ENCODE measurements at regions of chr1 and their contacts with region 1.

Region 1: DNA sequence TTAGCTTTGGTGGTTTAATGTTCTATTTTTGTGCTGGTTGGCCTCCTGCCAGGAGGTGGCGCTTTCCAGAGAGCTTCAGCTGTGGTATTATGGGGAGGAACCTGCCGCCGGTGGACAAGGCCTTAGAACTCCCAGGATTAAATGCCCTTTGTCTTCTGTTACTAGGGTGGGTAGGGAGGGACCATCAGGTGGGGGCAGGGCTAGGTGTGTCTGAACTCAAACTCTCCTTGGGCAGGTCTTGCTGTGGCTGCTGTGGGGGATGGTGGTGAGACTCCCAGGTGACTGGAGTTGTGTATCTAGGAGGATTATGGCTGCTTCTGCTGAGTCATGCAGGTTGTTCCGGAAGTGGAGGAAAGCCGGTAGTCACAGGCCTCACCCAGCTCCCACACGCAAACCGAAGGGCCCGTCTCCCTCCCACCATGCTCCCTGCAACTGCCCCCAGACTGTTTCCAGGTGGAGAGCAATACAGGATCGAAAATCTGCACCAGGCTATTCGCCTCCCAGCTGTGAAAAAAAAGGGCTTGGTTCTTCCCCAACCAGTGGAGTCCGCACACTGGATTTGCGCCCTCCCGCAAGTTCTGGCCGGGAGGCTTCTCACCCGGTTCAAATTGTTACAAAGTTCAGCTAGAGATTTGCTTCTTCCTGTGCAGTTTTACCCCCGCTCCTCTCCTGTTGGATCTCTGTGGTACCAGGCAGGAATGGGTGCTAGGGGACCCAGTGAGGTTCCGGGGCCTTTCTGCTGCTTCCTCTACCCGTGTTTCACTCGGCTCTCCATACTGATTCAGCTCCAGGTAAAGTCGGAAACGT is 220.5 kb downstream of the CENPF start:
- H3K4me3 Mint-ChIP-seq: no peak overlapping the region
- H3K27ac Mint-ChIP-seq: no peak overlapping the region
- H3K4me1 Mint-ChIP-seq: no peaks in the 10 kb centered on the region
- H3K27me3 Mint-ChIP-seq: no peaks in the 10 kb centered on the region

Region 2: GRCh38 chr1:214882616-214883015 is 59.1 kb after region 1 on chr1:
- intact Hi-C with region 1: no loop called
- H3K4me3 Mint-ChIP-seq: no peak overlapping the region
- H3K27ac Mint-ChIP-seq: no peak overlapping the region
- H3K4me1 Mint-ChIP-seq: no peaks in the 10 kb centered on the region
- H3K27me3 Mint-ChIP-seq: no peaks in the 10 kb centered on the region

Region 3: GRCh38 chr1:214901718-214902117 is 78.2 kb after region 1 on chr1:
- intact Hi-C with region 1: no loop called
- H3K4me3 Mint-ChIP-seq: no peak overlapping the region
- H3K27ac Mint-ChIP-seq: no peak overlapping the region
- H3K4me1 Mint-ChIP-seq: no peaks in the 10 kb centered on the region
- H3K27me3 Mint-ChIP-seq: no peaks in the 10 kb centered on the region

Region 4: DNA sequence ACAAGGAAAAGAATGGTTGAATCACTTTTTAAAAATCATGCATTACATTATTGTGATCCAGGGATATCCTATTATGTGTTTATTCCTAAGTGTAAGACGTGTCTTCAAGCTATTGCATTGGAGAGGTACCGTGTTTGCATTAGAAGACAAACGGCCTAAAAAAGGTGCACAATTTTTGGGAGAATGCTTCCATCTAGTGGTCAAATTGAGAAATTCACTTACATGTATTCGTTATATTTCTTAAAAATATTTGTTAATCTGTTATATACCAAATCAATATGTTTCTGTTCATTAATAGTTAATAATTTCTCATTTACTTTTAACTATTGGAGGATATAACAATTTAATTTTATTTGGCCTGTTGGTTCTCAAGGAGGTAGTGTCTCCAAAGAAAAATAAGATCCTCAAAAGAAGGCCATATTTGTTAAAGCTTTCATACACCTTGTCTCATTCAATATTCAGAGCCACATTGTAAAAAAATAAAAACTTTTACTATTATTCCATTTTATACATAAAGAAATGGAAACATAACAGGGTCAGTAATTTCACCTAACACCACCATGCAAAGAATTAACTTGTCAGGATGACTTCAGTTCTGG is 703.1 kb after region 1 on chr1:
- intact Hi-C with region 1: loop called (anchors 5 kb)
- H3K4me3 Mint-ChIP-seq: no peak overlapping the region
- H3K27ac Mint-ChIP-seq: no peak overlapping the region
- H3K4me1 Mint-ChIP-seq: peaks cover 16% of the 10 kb centered on the region
- H3K27me3 Mint-ChIP-seq: peaks cover 3% of the 10 kb centered on the region